Calu3 (cell line): ENCODE measurements at regions of chr4 and their contacts with region 1.

Region 1: GRCh38 chr4:120049732-120050494 is 16.7 kb downstream of the MAD2L1 start:
- DNase-seq: peak; percentile 75
- H3K4me3 Mint-ChIP-seq: peak overlapping the region; percentile 24
- H3K27ac Mint-ChIP-seq: peak overlapping the region; percentile 56
- H3K4me1 Mint-ChIP-seq: no peaks in the 10 kb centered on the region
- H3K27me3 Mint-ChIP-seq: no peaks in the 10 kb centered on the region
- CTCF ChIP-seq: peak; percentile 71

Region 2: DNA sequence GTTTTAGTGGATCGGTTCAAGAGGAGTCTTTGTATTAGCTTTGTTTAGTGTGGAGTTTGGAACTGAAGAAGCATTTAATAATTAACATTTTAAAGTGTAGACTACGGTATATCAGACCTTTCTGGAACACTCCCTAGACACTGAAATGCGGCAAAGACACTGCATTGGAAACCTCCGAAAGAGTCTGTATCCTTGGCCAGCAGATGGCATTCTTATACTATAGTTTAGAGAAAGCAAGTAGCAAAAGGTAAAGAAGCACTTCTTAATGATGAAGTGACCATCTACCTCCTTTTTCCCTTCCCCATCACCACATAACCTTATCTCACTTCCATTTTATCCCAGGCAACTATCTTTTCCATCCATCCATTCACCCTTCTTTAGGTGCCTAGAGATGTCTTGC is 735.6 kb before region 1 on chr4:
- CTCF ChIA-PET with region 1: no interaction called
- intact Hi-C with region 1: loop called (anchors 5 kb)
- DNase-seq: no peak
- H3K4me3 Mint-ChIP-seq: no peak overlapping the region
- H3K27ac Mint-ChIP-seq: no peak overlapping the region
- H3K4me1 Mint-ChIP-seq: no peaks in the 10 kb centered on the region
- H3K27me3 Mint-ChIP-seq: no peaks in the 10 kb centered on the region
- CTCF ChIP-seq: no peak

Region 3: GRCh38 chr4:119559044-119559647 is 490.8 kb before region 1 on chr4:
- CTCF ChIA-PET with region 1: interaction called, 3 read pairs
- intact Hi-C with region 1: loop called (anchors 2 kb)
- DNase-seq: no peak
- H3K4me3 Mint-ChIP-seq: no peak overlapping the region
- H3K27ac Mint-ChIP-seq: no peak overlapping the region
- H3K4me1 Mint-ChIP-seq: no peaks in the 10 kb centered on the region
- H3K27me3 Mint-ChIP-seq: no peaks in the 10 kb centered on the region
- CTCF ChIP-seq: no peak

Region 4: DNA sequence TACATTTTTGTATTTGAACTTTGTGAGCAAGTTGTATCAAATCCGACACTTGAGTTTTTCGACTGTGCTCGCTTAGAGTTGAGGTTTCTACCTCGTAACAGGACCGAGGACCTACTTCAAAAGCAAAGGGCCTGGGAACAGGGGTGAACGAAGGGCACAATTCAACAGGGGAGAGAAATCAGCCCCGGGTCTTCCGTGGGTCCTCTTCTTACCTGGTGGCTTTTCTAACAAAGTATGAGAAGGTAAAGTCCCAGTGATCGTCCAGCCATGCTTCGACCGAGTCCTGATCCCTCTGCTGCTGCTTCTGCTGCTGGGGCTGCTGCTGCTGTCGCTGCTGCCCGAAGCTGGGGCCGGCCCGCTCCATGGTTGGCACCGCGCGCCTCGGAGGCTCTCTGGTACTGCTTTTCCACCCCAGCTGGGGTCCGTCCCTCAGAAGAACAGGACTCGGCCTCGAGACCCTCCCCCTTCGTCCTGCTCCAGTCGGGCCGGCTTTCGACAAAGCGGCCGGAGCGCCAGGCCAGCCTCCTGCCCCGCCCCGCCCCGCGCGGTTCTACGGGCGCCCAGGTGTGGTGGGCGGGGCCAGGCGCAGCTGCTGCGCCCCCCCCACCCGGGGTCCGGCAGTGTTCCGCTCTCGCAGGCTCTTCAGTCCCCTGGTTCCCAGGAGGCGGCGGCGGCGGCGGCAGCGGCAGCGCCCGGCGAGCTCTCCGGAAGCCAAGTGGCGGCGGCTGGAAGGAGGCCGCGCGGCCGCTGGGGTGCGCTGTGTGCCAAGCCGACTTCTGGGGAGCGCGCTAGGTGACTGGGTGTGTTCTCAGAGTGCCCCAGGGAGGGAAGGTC is 421.4 kb before region 1 on chr4 and contains the start of gene PDE5A:
- CTCF ChIA-PET with region 1: no interaction called
- intact Hi-C with region 1: loop called (anchors 2 kb)
- DNase-seq: peak; percentile 90
- H3K4me3 Mint-ChIP-seq: peak within 1 kb of the TSS; percentile 98
- H3K27ac Mint-ChIP-seq: peak within 1 kb of the TSS; percentile 98
- H3K4me1 Mint-ChIP-seq: peaks cover 8% of the 10 kb centered on the region
- H3K27me3 Mint-ChIP-seq: no peaks in the 10 kb centered on the region
- CTCF ChIP-seq: peak; percentile 59
- total RNA-seq, gene PDE5A: 41.4 and 41.9 TPM in 2 replicates

Region 5: DNA sequence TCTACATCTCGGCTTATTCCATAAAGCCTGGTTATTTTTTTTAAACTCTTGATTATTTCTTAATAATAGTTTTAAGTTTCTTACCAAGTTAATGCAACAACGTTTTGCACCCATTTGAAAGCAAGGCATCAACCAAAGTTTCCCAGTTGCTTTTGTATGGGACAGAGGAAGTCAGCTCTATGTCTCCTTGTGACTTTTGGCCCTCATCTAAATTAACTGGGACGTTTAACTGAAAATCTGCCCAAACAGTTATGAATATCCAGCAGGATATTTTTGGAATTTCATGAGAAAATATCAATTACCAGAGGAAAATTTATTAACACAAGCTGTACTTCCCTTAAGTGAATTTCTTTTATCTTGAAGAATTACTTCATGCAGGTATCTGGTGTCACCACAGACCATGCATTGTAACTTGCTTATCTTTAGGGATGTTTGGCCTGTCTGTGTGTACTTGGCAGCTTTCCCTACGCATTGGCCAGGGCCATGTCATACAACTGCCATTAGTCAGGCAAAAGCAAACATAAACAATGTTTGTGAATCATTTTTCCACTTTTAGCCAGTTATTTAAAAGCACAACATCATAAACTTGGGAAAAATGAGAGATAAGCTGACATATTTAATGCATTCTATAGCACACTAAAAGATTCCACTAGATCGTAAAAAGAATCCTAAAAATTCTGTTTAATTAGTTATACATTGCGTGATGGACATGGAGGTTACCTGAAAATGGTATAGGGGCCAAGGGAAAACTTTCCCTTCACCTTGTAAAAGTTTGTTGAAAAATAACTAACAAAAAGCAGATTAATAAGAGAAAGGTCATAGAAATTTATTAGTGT is 319.9 kb before region 1 on chr4:
- CTCF ChIA-PET with region 1: no interaction called
- intact Hi-C with region 1: loop called (anchors 5 kb)
- DNase-seq: peak; percentile 77
- H3K4me3 Mint-ChIP-seq: peak overlapping the region; percentile 28
- H3K27ac Mint-ChIP-seq: peak overlapping the region; percentile 96
- H3K4me1 Mint-ChIP-seq: peaks cover 83% of the 10 kb centered on the region
- H3K27me3 Mint-ChIP-seq: no peaks in the 10 kb centered on the region
- CTCF ChIP-seq: no peak

Region 6: GRCh38 chr4:119794704-119795103 is 255.2 kb before region 1 on chr4:
- CTCF ChIA-PET with region 1: no interaction called
- intact Hi-C with region 1: loop called (anchors 2 kb)
- DNase-seq: peak; percentile 2
- H3K4me3 Mint-ChIP-seq: no peak overlapping the region
- H3K27ac Mint-ChIP-seq: peak overlapping the region; percentile 78
- H3K4me1 Mint-ChIP-seq: peaks cover 70% of the 10 kb centered on the region
- H3K27me3 Mint-ChIP-seq: no peaks in the 10 kb centered on the region
- CTCF ChIP-seq: no peak

Region 7: DNA sequence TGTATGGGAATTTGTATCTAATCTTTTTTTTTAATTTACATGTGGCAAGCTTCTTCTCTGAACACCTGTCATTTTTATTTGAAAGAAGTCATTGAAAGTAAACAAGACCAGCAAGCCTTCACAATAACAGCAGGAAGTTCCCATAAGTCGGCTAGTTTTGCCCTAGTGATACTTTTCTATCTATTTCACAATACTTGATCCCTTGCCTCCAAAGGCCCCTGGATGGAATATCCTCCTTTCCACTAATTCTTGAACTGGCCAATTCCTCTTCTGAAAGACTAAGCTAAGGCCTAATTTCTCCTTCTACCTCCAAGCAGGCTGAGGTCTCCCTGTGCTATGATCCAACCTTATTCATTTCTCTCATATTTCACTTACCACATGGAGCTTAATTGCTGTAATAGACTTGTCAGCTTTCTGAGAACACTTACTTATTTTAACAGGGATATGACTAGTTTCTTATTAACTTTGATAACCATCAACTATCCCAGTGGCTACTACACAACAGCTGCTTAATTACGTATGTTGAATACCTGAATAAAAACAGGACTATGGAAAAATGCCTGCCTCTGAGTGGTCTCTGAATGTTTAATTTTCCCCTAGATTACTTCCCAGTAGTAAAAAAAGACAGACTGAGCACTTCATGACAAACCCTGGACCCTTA is 177.4 kb before region 1 on chr4:
- CTCF ChIA-PET with region 1: no interaction called
- intact Hi-C with region 1: loop called (anchors 2 kb)
- DNase-seq: peak; percentile 3
- H3K4me3 Mint-ChIP-seq: peak overlapping the region; percentile 22
- H3K27ac Mint-ChIP-seq: peak overlapping the region; percentile 92
- H3K4me1 Mint-ChIP-seq: peaks cover 23% of the 10 kb centered on the region
- H3K27me3 Mint-ChIP-seq: no peaks in the 10 kb centered on the region
- CTCF ChIP-seq: no peak

Region 8: GRCh38 chr4:120096508-120097297 is 46.8 kb after region 1 on chr4:
- CTCF ChIA-PET with region 1: no interaction called
- intact Hi-C with region 1: no loop called
- DNase-seq: no peak
- H3K4me3 Mint-ChIP-seq: no peak overlapping the region
- H3K27ac Mint-ChIP-seq: no peak overlapping the region
- H3K4me1 Mint-ChIP-seq: no peaks in the 10 kb centered on the region
- H3K27me3 Mint-ChIP-seq: no peaks in the 10 kb centered on the region
- CTCF ChIP-seq: no peak